Psoas muscle (tissue), 8 donors: ENCODE measurements at regions of chrX and their contacts with region 1.

Region 1: GRCh38 chrX:101415180-101416145 is 7.4 kb downstream of the HNRNPH2 start:
- DNase-seq: no peak
- ATAC-seq: peak; percentile 33 to 70 (median 58)
- H3K4me3 ChIP-seq: no peak overlapping the region
- H3K27ac ChIP-seq: peak overlapping the region; percentile 72
- H3K4me1 ChIP-seq: peaks cover 12% of the 10 kb centered on the region
- H3K27me3 ChIP-seq: peaks cover 0 to 16% (median 0%) of the 10 kb centered on the region in 3 donors
- CTCF ChIP-seq: peak; percentile 79

Region 2: DNA sequence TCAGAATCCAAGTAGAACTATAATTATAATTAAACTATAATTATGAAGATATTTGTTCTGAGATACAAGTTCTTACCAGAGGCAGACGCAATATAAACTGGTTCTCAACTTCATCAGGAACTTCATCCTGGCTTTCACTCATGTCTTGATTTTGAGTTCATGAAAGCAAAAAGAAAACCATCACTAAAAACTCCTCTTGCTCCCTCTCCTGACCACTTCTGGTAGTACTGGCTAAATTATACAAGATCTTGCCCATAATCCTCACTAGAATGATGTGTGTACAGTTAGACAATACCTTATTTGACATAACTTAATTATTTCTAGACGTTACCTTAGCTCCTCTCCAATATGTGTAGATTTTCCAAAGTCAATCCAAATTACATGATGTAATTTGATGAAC is 128.1 kb before region 1 on chrX:
- intact Hi-C with region 1: no loop called
- DNase-seq: no peak
- ATAC-seq: no peak
- H3K4me3 ChIP-seq: no peak overlapping the region
- H3K27ac ChIP-seq: no peak overlapping the region
- H3K4me1 ChIP-seq: no peaks in the 10 kb centered on the region
- H3K27me3 ChIP-seq: peaks cover 0 to 20% (median 6%) of the 10 kb centered on the region in 3 donors
- CTCF ChIP-seq: peak; percentile 56

Region 3: DNA sequence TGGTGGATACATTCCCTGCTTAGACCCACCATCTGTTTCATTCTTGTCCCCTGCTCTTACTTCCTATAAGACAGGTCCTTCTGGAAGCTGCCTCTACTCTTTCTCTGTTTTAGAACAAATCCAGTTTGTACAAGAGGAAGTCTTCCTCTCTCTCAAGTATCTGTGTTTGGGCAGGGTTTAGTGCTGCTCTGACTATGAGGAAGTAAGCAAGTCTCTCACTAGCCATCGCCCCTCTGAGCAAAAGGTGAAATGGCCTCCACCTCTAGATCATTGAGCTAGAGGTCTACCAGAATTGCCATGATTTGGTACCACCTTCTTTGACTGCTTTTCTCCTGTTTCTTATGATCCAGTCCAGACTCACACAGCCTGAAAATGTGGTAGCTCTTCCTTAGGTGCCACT is 37.9 kb before region 1 on chrX:
- intact Hi-C with region 1: no loop called
- DNase-seq: no peak
- ATAC-seq: no peak
- H3K4me3 ChIP-seq: no peak overlapping the region
- H3K27ac ChIP-seq: no peak overlapping the region
- H3K4me1 ChIP-seq: no peaks in the 10 kb centered on the region
- H3K27me3 ChIP-seq: peaks cover 0 to 4% (median 0%) of the 10 kb centered on the region in 3 donors
- CTCF ChIP-seq: no peak

Region 4: GRCh38 chrX:101550362-101550750 is 134.9 kb after region 1 on chrX and contains the start of gene ARMCX1:
- intact Hi-C with region 1: loop called in 1 of 2 experiments (anchors 5 kb)
- DNase-seq: peak; percentile 65 to 80
- ATAC-seq: peak; percentile 83 to 97 (median 94)
- H3K4me3 ChIP-seq: peak within 1 kb of the TSS; percentile 65
- H3K27ac ChIP-seq: peak within 1 kb of the TSS; percentile 75
- H3K4me1 ChIP-seq: no peaks in the 10 kb centered on the region
- H3K27me3 ChIP-seq: no peaks in the 10 kb centered on the region
- CTCF ChIP-seq: no peak
- total RNA-seq, gene ARMCX1: 18.0 to 46.9 (median 21.1) TPM

Region 5: DNA sequence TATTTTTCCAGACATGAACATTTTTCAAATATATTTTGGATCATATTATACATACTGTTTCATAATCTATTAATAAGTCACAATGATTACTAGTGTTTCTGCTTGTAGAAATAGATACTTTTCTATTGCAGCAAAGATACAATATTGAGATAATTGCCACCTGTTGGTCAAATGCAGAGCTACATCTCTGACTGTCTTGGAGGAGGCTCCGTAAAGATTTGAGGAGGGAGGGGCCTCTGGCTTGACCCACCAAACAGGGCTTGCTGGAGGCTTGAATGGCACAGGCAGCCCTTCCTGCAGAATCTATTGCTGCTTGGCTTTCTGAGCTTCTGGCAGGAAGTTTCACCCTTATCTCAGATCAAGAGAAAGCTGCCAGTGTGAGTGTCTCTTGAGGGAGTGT is 343.5 kb after region 1 on chrX:
- intact Hi-C with region 1: loop called in 1 of 2 experiments (anchors 10 kb)
- DNase-seq: peak in 1 of 2 donors; percentile 47
- ATAC-seq: peak in 1 of 4 donors; percentile 61
- H3K4me3 ChIP-seq: no peak overlapping the region
- H3K27ac ChIP-seq: no peak overlapping the region
- H3K4me1 ChIP-seq: no peaks in the 10 kb centered on the region
- H3K27me3 ChIP-seq: peaks cover 0 to 9% (median 0%) of the 10 kb centered on the region in 3 donors
- CTCF ChIP-seq: peak; percentile 49

Region 6: DNA sequence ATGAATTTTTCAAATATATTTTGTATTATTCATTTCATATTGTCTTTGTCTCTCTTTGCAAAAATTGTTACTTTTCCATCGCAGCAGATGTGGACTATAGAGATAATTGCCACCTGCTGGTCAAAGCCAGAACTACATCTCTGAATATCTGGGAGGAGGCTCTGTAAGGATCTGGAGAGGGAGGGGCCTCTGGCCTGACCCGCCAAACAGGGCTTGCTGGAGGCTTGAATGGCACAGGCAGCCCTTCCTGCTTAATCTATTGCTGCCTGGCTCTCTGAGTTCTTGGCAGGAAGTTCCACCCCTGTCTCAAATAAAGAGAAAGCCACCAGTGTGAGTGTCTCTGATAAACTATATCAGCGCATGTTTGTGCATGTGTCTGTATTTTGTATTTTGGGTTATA is 383.9 kb after region 1 on chrX:
- intact Hi-C with region 1: loop called (anchors 5 kb)
- DNase-seq: peak; percentile 56 to 75
- ATAC-seq: peak; percentile 73 to 94 (median 92)
- H3K4me3 ChIP-seq: peak overlapping the region; percentile 13
- H3K27ac ChIP-seq: no peak overlapping the region
- H3K4me1 ChIP-seq: no peaks in the 10 kb centered on the region
- H3K27me3 ChIP-seq: no peaks in the 10 kb centered on the region
- CTCF ChIP-seq: peak; percentile 82

Region 7: DNA sequence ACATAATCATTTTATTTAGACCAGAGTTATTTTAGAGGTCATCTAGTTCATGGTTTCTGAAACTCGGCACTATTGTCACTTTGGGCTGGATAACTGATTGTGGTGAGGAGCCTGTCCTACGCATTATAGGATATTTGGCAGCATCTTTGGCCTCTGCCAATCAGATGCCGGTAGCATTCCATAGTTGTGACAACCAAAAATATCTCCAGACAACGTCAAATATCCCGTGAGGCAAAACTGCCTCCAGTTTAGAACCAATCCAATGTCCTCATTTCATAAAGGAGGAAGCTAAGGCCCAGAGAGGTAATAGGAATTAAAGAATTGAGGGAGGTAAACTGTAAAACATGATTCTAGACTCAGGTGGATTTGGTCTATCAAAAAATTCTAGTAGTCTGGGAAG is 510.3 kb after region 1 on chrX:
- intact Hi-C with region 1: loop called in 1 of 2 experiments (anchors 10 kb)
- DNase-seq: no peak
- ATAC-seq: no peak
- H3K4me3 ChIP-seq: no peak overlapping the region
- H3K27ac ChIP-seq: no peak overlapping the region
- H3K4me1 ChIP-seq: no peaks in the 10 kb centered on the region
- H3K27me3 ChIP-seq: no peaks in the 10 kb centered on the region
- CTCF ChIP-seq: no peak